Natural killer cell (primary cell): ENCODE measurements at regions of chr1 and their contacts with region 1.

Region 1: GRCh38 chr1:58162952-58163550 is 383.5 kb downstream of the OMA1 start:
- DNase-seq: peak in 1 of 2 donors; percentile 22
- ATAC-seq: peak in 1 of 3 donors; percentile 51
- H3K4me3 ChIP-seq: no peak overlapping the region
- H3K4me3 Mint-ChIP-seq: no peak overlapping the region
- H3K27ac ChIP-seq: no peak overlapping the region
- H3K27ac Mint-ChIP-seq: no peak overlapping the region
- H3K4me1 ChIP-seq: no peaks in the 10 kb centered on the region
- H3K4me1 Mint-ChIP-seq: no peaks in the 10 kb centered on the region
- H3K27me3 ChIP-seq: no peaks in the 10 kb centered on the region
- H3K27me3 Mint-ChIP-seq: peaks cover 0 to 4% of the 10 kb centered on the region in 2 donors
- CTCF ChIP-seq: peak; percentile 33

Region 2: DNA sequence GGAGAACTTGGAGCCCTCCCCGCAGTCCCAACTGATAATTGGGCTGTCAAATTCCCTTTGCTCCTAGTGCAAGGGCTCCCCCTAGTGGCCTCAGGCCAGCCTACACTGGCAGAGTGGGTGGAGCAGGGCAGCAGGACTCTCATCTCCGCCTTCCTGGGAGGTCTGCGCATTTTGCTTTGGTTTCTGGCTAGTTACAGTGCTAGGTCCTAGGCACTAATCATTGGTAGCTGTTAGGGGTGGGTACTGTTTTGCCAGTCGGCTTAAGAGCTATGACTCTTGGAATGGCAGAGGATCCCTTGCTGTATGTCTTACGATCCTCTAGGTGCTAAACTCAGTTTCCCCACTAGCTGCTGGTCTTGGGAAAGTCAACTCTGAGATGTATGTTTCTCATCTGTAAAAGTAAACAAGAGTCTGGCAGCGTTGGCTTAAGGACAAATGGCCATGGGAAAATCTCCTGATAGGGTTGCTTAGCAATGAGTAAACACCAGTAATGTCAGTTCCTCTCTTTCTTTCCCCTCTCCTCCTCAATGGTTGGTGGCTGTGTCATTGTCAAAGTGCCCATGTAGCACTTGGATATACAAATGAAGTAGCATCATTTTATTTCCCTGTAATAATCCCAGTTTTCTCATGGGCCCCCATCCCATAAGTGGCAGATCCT is 1341.8 kb before region 1 on chr1:
- intact Hi-C with region 1: loop called (anchors 10 kb)
- DNase-seq: peak; percentile 56 to 63
- ATAC-seq: peak; percentile 63 to 93 (median 74)
- H3K4me3 ChIP-seq: no peak overlapping the region
- H3K4me3 Mint-ChIP-seq: no peak overlapping the region
- H3K27ac ChIP-seq: no peak overlapping the region
- H3K27ac Mint-ChIP-seq: no peak overlapping the region
- H3K4me1 ChIP-seq: no peaks in the 10 kb centered on the region
- H3K4me1 Mint-ChIP-seq: no peaks in the 10 kb centered on the region
- H3K27me3 ChIP-seq: no peaks in the 10 kb centered on the region
- H3K27me3 Mint-ChIP-seq: peaks cover 5 to 38% of the 10 kb centered on the region in 2 donors
- CTCF ChIP-seq: peak; percentile 87

Region 3: DNA sequence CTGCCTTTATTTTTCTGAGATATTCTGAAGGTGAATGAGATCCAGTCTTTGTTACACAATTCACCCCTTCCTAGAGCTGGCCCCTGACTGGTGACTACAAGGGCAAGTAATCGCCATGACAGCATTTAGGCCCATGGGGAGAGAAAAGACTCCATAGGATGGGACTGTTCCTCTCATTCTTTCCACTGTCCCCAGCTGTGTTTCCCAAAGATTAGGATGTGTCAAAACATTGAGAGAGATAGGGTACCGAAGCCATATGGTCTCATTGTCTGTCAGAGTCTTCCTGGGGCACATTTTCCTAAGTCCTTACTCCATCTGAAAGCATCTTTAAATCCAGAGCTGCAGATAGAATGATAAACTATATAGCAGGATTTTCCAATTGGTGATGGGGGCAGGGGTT is 40.0 kb before region 1 on chr1:
- intact Hi-C with region 1: no loop called
- DNase-seq: no peak
- ATAC-seq: no peak
- H3K4me3 ChIP-seq: no peak overlapping the region
- H3K4me3 Mint-ChIP-seq: no peak overlapping the region
- H3K27ac ChIP-seq: no peak overlapping the region
- H3K27ac Mint-ChIP-seq: no peak overlapping the region
- H3K4me1 ChIP-seq: no peaks in the 10 kb centered on the region
- H3K4me1 Mint-ChIP-seq: peaks cover 0 to 4% of the 10 kb centered on the region in 2 donors
- H3K27me3 ChIP-seq: no peaks in the 10 kb centered on the region
- H3K27me3 Mint-ChIP-seq: no peaks in the 10 kb centered on the region
- CTCF ChIP-seq: no peak

Region 4: DNA sequence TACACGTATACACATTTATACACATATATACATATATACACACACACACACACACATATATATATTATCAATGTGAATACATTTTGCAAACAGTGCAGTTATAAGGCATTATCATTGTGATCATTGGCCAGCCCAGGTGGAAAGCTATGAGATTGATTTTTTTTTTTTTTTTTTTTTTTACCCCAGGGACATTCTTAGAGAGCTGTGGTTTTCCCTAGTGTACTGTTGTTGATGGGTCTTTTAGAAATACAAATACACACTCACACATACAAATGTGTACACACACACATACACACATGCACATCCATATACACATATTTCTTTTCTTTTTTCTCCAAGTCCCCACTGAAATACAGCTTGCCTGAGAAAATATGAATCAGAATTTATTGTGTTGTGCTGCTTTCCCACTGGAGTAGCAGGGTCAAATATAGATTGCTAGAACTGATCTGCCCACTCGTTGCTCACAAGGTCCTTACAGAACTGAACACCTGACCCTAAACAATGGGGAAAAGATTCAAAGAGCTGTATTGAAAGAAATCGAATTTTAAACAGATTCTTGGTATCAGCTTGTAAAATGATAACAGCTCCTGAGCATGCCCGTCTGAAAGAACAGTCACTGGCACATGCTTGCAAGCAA is 57.9 kb after region 1 on chr1:
- intact Hi-C with region 1: loop called (anchors 2 kb)
- DNase-seq: no peak
- ATAC-seq: no peak
- H3K4me3 ChIP-seq: no peak overlapping the region
- H3K4me3 Mint-ChIP-seq: no peak overlapping the region
- H3K27ac ChIP-seq: no peak overlapping the region
- H3K27ac Mint-ChIP-seq: no peak overlapping the region
- H3K4me1 ChIP-seq: no peaks in the 10 kb centered on the region
- H3K4me1 Mint-ChIP-seq: no peaks in the 10 kb centered on the region
- H3K27me3 ChIP-seq: no peaks in the 10 kb centered on the region
- H3K27me3 Mint-ChIP-seq: peaks cover 5 to 8% of the 10 kb centered on the region in 2 donors
- CTCF ChIP-seq: no peak